PC-3 (cell line): ENCODE measurements at regions of chr2 and their contacts with region 1.

Region 1: DNA sequence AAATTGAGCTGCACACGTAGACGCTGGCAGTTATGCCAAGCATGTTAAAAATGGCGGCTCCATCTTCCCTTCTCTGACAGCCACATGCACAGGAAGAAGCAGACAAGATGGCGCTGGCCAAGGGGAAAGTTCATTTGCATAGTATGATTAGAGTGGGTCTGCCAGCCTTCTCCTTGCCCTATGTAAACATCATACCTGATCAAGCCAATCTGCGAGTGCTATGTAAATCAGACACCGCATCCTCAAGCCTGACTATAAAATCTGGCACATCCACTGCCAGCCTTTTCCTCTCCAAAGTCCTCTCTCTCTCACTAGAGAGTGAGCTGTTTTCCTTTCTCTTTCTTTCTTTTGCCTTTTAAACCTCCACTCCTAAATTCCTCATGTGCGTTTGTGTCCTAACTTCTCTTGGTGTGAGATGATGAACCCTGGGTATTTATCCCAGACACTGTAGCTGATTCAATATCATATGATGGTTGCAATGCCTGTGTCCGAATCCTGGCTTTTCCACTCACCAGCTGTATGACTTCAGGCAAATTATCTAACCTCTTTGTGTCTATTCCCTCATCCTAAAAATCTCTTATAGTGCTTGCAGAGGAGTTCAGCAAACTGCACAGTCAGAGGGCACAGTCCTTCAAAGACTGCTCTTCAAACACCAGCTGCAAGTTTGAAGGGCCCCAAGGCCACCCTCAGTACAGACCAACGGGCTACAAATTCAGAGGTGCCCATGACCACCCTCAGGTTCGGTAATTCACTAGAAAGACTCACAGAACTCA is 39.3 kb upstream of the ITSN2 start:
- DNase-seq: no peak
- ATAC-seq: no peak
- H3K4me3 ChIP-seq: no peak overlapping the region
- H3K27ac ChIP-seq: no peak overlapping the region
- H3K4me1 ChIP-seq: peaks cover 5% of the 10 kb centered on the region
- H3K27me3 ChIP-seq: no peaks in the 10 kb centered on the region
- CTCF ChIP-seq: no peak

Region 2: GRCh38 chr2:24269265-24269664 is 130.4 kb before region 1 on chr2:
- CTCF ChIA-PET with region 1: no interaction called
- POLR2A ChIA-PET with region 1: interaction called, 13 read pairs
- intact Hi-C with region 1: no loop called
- DNase-seq: peak; percentile 86
- ATAC-seq: peak; percentile 100
- H3K4me3 ChIP-seq: no peak overlapping the region
- H3K27ac ChIP-seq: peak overlapping the region; percentile 63
- H3K4me1 ChIP-seq: peaks cover 24% of the 10 kb centered on the region
- H3K27me3 ChIP-seq: no peaks in the 10 kb centered on the region
- CTCF ChIP-seq: no peak

Region 3: DNA sequence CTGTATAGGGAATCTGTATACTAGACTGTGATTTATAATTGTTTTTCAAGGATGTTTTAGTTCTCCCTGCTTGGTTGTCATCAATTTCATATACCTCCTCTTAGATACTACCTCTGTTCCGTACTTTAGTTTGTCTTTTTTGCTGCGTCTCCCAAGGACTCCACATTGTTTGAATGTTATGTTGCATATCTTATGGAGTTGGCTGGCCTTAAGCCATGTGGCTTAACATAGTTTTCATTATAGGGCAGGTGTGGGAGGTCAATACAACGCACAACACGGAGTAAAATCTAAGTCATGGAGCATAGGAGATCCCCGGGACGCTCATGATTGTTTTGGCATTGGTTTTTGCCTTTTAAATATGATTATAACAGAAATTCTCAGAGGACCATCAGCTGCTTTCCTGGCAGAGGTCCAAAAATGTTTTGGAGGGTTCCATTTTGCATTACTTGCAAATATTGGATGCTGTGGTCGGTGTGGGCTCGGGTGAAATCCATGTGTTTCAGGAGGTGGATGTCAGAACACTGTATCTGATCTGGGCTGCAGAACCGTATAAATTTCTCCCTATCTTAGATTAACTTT is 94.7 kb after region 1 on chr2:
- CTCF ChIA-PET with region 1: no interaction called
- POLR2A ChIA-PET with region 1: no interaction called
- intact Hi-C with region 1: no loop called
- DNase-seq: no peak
- ATAC-seq: no peak
- H3K4me3 ChIP-seq: no peak overlapping the region
- H3K27ac ChIP-seq: no peak overlapping the region
- H3K4me1 ChIP-seq: peaks cover 29% of the 10 kb centered on the region
- H3K27me3 ChIP-seq: no peaks in the 10 kb centered on the region
- CTCF ChIP-seq: no peak